Body of pancreas (tissue), 4 donors: ENCODE measurements at regions of chr10 and their contacts with region 1.

Region 1: DNA sequence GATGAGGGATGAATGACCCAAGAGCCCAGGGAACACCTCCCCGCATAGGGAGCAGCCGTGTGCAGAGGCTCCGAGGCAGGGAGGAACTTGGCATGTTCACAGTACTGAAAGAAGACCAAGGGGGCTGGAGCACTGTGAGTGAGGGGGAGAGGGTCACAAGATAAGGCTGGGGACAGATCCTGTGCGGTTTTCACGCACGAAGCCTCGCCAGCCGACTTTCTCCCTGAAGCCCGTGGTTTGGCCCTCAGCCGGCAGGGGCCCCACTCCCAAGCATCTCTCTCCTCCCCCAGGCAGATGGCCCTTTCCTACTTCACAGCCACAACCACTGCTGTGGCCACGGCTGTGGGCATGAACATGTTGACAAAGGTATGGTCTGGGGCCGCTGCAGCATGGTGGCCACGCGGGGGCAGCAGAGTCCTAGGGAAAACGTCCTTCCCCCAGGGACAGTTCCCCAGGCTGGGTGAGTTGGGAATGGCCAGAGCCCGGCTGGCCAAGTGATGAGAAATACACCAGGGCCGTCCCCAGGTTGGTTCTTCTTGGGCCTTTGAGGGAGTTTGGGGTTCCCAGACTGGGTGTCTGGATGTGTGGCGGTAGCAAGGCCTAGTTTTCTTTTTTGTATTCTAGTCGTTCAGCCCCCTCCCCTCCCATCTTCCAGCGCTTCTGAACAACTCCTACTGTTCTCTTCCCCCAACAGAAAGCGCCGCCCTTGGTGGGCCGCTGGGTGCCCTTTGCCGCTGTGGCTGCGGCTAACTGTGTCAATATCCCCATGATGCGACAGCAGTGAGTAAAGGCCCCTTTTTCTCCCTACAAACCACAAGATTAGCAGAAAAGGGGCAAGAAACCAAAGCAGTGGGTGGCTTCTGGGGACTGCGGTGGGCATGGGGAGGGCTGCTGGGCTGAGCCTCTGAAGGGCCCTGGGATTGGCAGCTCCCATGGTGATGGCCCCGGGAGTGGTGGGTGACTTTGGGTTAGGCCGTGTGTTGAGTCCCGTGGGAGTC is 14.4 kb upstream of the WBP1L start:
- DNase-seq: peak; percentile 83 to 87 (median 86)
- ATAC-seq: peak; percentile 95
- H3K4me3 ChIP-seq: no peak overlapping the region
- H3K27ac ChIP-seq: no peak overlapping the region
- H3K4me1 ChIP-seq: no peaks in the 10 kb centered on the region
- H3K27me3 ChIP-seq: no peaks in the 10 kb centered on the region
- CTCF ChIP-seq: peak; percentile 52 to 90 (median 85)
- POLR2A ChIP-seq: no peak

Region 2: GRCh38 chr10:102432162-102432950 is 297.0 kb before region 1 on chr10 and contains the start of gene CUEDC2:
- intact Hi-C with region 1: no loop called
- DNase-seq: peak; percentile 96 to 97 (median 96)
- ATAC-seq: peak; percentile 98
- H3K4me3 ChIP-seq: peak within 1 kb of the TSS; percentile 42 to 79
- H3K27ac ChIP-seq: peak within 1 kb of the TSS; percentile 60 to 76 (median 70)
- H3K4me1 ChIP-seq: peaks cover 15% of the 10 kb centered on the region
- H3K27me3 ChIP-seq: no peaks in the 10 kb centered on the region
- CTCF ChIP-seq: peak in 1 of 7 experiments; percentile 26
- POLR2A ChIP-seq: peak in 2 of 3 donors; percentile 61 to 67
- total RNA-seq, gene CUEDC2: 30.3 to 35.5 TPM

Region 3: GRCh38 chr10:102555781-102556328 is 173.5 kb before region 1 on chr10:
- intact Hi-C with region 1: no loop called
- DNase-seq: no peak
- ATAC-seq: no peak
- H3K4me3 ChIP-seq: no peak overlapping the region
- H3K27ac ChIP-seq: no peak overlapping the region
- H3K4me1 ChIP-seq: no peaks in the 10 kb centered on the region
- H3K27me3 ChIP-seq: no peaks in the 10 kb centered on the region
- CTCF ChIP-seq: no peak
- POLR2A ChIP-seq: no peak

Region 4: DNA sequence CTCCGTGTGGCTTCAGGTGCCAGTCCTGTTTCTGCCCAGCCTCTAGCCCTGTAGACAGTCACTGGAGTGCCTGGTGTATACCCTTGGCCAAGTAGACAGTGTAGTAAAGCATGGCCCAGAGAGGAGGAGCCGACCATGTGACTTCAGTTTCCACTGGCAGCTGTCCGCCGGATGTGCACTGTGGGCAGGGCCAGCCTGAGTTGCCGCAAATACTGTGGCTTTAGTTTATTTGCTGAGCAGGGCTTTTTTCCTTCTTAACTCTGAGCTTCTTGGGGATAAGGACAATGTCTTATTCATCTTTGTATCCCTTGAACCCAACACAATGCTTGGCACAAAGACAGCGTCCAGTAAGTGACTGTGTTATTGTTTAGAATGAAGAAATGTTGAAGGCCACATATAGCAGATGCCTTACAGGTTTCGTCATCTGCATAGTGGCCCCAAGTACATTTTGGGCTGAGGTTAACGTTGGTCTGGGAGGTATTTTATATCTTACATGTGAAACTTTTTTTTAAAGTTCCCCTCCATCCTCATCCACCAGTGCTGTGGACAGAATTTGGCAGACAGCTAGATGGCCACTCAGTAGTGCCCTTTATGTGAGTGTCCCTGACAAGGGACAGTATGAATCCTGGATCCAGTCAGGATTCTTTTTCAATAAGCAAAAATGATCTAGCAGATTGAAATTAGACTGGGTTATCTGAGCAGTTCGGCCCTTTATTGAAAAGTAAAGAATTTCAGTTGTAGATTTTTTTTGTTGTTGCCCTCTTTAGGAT is 67.3 kb after region 1 on chr10:
- intact Hi-C with region 1: no loop called
- DNase-seq: peak; percentile 45 to 83 (median 70)
- ATAC-seq: peak; percentile 83
- H3K4me3 ChIP-seq: no peak overlapping the region
- H3K27ac ChIP-seq: peak overlapping the region in 2 of 4 donors; percentile 32 to 70
- H3K4me1 ChIP-seq: peaks cover 6% of the 10 kb centered on the region
- H3K27me3 ChIP-seq: no peaks in the 10 kb centered on the region
- CTCF ChIP-seq: no peak
- POLR2A ChIP-seq: peak in 1 of 3 donors; percentile 52

Region 5: DNA sequence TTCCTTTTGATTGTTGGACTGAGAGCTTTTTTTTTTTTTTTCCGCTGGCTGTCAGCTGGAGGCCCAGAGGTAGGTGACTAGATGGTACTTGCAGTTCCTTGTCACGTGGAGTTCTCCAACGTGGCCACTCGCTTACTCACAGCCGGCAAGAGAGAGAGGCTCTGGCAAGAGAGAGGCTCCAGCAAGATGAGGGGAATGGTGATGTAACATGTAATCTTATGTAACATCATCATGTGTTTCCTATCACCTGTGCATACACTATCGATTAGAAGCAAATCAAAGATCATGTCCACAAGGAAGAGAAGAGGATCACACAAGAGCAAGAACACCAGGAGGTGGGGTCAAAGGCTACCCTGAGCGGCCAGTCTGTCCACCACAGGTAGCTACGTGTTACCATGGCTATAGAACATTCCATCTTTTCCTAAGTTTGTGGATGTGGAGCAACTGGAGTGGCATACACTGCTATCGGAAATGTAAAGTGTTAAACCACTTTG is 120.7 kb after region 1 on chr10:
- intact Hi-C with region 1: no loop called
- DNase-seq: no peak
- ATAC-seq: no peak
- H3K4me3 ChIP-seq: no peak overlapping the region
- H3K27ac ChIP-seq: no peak overlapping the region
- H3K4me1 ChIP-seq: peaks cover 2% of the 10 kb centered on the region
- H3K27me3 ChIP-seq: no peaks in the 10 kb centered on the region
- CTCF ChIP-seq: no peak
- POLR2A ChIP-seq: no peak

Region 6: GRCh38 chr10:102904346-102904745 is 175.0 kb after region 1 on chr10:
- intact Hi-C with region 1: loop called (anchors 10 kb)
- DNase-seq: no peak
- ATAC-seq: no peak
- H3K4me3 ChIP-seq: no peak overlapping the region
- H3K27ac ChIP-seq: no peak overlapping the region
- H3K4me1 ChIP-seq: no peaks in the 10 kb centered on the region
- H3K27me3 ChIP-seq: no peaks in the 10 kb centered on the region
- CTCF ChIP-seq: no peak
- POLR2A ChIP-seq: no peak